ENCODE measurements at regions of chr14 and their contacts with region 1.

Region 1: DNA sequence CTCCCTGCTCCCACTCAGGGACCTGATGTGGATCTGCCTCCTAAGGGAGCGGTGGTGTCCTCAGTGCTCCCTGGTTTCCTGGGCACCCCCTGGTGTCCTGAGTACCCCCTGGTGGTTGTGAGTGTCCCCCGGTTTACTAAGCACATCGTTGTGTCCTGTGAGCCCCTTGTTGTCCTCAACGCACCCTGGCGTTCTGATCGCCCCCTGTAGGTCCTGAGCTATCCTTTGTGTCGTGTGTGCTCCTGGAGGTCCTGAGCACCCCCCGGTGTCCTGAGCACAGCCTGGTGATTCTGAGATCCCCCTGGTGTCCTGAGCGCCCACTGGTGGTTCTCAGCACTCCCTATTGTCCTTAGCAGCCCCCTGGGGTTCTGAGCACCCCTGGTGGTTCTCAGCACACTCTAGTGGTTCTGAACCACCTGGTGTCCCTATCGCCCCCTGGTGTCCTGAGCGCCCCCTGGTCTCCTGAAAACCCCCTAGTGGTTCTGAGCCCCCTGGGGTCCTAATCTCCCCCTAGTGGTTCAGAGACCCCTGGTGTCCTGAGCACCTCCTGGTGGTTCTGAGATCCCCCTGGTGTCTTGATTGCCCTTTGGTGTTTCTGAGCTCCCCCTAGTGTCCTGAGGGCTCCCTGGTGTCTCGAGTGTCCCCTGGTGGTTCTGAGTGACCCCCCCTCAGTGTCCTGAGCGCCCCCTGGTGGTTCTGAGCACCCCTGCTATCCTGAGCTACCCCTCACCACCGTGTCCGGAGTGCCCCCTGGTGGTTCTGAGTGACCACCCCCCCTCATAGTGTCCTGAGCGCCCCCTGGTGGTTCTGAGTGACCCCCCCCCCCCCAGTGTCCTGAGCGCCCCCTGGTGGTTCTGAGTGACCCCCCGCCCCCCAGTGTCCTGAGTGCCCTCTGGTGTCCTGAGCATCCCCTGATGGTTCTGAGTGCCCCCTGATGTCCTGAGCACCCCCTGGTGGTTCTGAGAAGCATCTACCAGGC is 615.1 kb downstream of the TMEM121 start:
- DNase-seq: peak; percentile 40
- H3K4me3 Mint-ChIP-seq: no peak overlapping the region
- H3K27ac Mint-ChIP-seq: no peak overlapping the region
- H3K4me1 Mint-ChIP-seq: peaks cover 16% of the 10 kb centered on the region
- H3K27me3 Mint-ChIP-seq: peaks cover 9% of the 10 kb centered on the region

Region 2: GRCh38 chr14:106120101-106120500 is 21.4 kb before region 1 on chr14:
- CTCF ChIA-PET with region 1: interaction called, 14 read pairs
- POLR2A ChIA-PET with region 1: no interaction called
- DNase-seq: no peak
- H3K4me3 Mint-ChIP-seq: no peak overlapping the region
- H3K27ac Mint-ChIP-seq: no peak overlapping the region
- H3K4me1 Mint-ChIP-seq: peaks cover 22% of the 10 kb centered on the region
- H3K27me3 Mint-ChIP-seq: peaks cover 50% of the 10 kb centered on the region

Region 3: GRCh38 chr14:106129274-106129673 is 12.3 kb before region 1 on chr14:
- CTCF ChIA-PET with region 1: interaction called, 10 read pairs
- POLR2A ChIA-PET with region 1: no interaction called
- DNase-seq: peak; percentile 44
- H3K4me3 Mint-ChIP-seq: no peak overlapping the region
- H3K27ac Mint-ChIP-seq: no peak overlapping the region
- H3K4me1 Mint-ChIP-seq: peaks cover 23% of the 10 kb centered on the region
- H3K27me3 Mint-ChIP-seq: peaks cover 23% of the 10 kb centered on the region

Region 4: DNA sequence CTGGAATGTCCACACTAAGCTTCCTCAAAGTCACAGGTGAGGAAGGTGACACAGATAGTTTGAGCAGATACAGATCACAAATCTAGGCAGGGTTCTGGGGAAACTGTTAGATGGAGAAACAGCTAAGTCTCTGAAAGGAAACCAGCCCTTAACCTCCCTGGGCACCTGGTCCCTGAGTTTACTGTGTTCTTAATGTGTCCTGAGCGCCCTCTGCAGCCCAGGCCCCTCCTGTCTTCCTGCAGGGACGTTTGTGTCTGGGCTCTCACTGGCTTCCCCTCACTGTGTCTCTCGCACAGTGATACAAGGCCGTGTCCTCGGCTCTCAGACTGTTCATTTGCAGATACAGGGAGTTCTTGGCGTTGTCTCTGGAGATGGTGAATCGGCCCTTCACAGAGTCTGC is 69.1 kb after region 1 on chr14:
- CTCF ChIA-PET with region 1: interaction called, 14 read pairs
- POLR2A ChIA-PET with region 1: no interaction called
- DNase-seq: peak; percentile 48
- H3K4me3 Mint-ChIP-seq: no peak overlapping the region
- H3K27ac Mint-ChIP-seq: no peak overlapping the region
- H3K4me1 Mint-ChIP-seq: peaks cover 13% of the 10 kb centered on the region
- H3K27me3 Mint-ChIP-seq: peaks cover 29% of the 10 kb centered on the region

Measured in activated CD4-positive, alpha-beta T cell treated with anti-CD3 and anti-CD28 coated beads, Interleukin-2, amount 10 ng/mL, durations not matched to agents 7 days and 5 days (primary cell).